Body of pancreas (tissue), 4 donors: ENCODE measurements at regions of chr14 and their contacts with region 1.

Region 1: DNA sequence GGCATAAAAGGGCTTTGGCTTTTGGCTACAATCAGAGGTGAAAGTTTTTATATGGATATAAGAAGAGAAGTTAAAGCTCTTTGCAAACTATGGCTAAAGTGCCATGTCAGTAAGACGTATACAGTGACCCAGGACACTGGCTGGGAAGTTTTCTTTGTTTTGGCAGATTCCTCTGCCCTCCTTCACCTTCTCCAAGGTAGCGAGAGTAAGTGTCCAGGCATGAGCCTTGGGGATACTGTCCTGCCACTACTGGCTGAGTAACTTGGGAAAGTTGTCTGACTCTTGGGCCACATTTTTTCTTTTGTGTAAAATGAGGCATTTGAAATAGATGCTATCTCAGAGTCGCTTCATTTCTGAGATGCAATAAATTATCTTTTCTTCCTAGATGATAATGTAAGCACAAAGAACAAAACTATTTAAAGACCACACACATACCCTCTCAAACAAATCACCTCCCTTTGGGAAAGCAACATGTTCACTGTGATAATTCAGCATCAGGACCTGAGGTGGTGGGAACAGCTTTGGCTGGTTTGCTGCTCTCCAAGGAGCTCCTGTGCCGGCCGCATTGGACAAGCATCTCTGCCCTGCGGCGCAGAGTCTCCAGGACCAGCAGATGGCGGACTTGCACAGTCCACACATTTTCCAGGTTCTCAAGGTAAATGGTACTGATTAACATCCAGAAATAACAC is 106.3 kb downstream of the PTCSC3 start:
- DNase-seq: peak; percentile 77 to 83 (median 81)
- ATAC-seq: peak; percentile 84
- H3K4me3 ChIP-seq: no peak overlapping the region
- H3K27ac ChIP-seq: peak overlapping the region in 3 of 4 donors; percentile 49 to 65 (median 49)
- H3K4me1 ChIP-seq: peaks cover 19% of the 10 kb centered on the region
- H3K27me3 ChIP-seq: no peaks in the 10 kb centered on the region
- CTCF ChIP-seq: peak; percentile 59 to 86 (median 78)
- POLR2A ChIP-seq: no peak

Region 2: DNA sequence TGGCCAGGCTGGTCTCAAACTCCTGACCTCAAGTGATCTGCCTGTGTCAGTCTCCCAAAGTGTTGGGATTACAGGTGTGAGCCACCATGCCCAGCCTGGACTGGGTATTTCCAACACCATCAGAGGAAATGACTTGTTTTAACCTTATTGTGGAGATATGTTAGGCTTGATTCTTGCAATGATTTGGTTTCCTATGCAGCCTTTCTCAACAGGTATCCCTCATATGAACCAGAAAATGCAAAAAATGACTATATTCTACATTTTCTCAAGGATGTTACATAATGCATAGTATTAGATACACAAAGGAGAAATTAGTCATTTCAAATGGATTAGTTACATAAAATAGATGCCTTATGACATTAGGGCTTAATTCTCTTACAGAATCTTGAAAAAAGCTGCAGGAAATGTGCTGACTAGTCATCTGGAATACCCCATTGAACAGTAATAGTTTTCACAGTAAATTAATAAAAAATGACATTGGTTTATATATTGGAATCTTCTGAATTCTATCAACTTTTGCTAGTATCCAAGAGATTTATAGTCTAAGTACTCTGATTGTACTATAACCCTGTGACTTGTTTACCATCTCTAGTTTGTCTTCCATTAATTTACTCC is 403.6 kb before region 1 on chr14:
- intact Hi-C with region 1: no loop called
- DNase-seq: no peak
- ATAC-seq: no peak
- H3K4me3 ChIP-seq: no peak overlapping the region
- H3K27ac ChIP-seq: no peak overlapping the region
- H3K4me1 ChIP-seq: no peaks in the 10 kb centered on the region
- H3K27me3 ChIP-seq: no peaks in the 10 kb centered on the region
- CTCF ChIP-seq: no peak
- POLR2A ChIP-seq: no peak

Region 3: GRCh38 chr14:36365766-36366165 is 295.6 kb after region 1 on chr14:
- intact Hi-C with region 1: loop called (anchors 5 kb)
- DNase-seq: no peak
- ATAC-seq: no peak
- H3K4me3 ChIP-seq: no peak overlapping the region
- H3K27ac ChIP-seq: no peak overlapping the region
- H3K4me1 ChIP-seq: no peaks in the 10 kb centered on the region
- H3K27me3 ChIP-seq: no peaks in the 10 kb centered on the region
- CTCF ChIP-seq: no peak
- POLR2A ChIP-seq: no peak

Region 4: GRCh38 chr14:36373982-36374673 is 304.0 kb after region 1 on chr14:
- intact Hi-C with region 1: loop called (anchors 5 kb)
- DNase-seq: peak; percentile 82 to 87 (median 86)
- ATAC-seq: peak; percentile 96
- H3K4me3 ChIP-seq: no peak overlapping the region
- H3K27ac ChIP-seq: no peak overlapping the region
- H3K4me1 ChIP-seq: no peaks in the 10 kb centered on the region
- H3K27me3 ChIP-seq: no peaks in the 10 kb centered on the region
- CTCF ChIP-seq: peak; percentile 73 to 89 (median 81)
- POLR2A ChIP-seq: no peak